ENCODE measurements at regions of chr3 and their contacts with region 1.

Region 1: GRCh38 chr3:81476692-81477091 is 284.8 kb downstream of the GBE1 start:
- DNase-seq: peak in 2 of 3 donors; percentile 53 to 59
- H3K4me3 ChIP-seq: no peak overlapping the region
- H3K27ac ChIP-seq: no peak overlapping the region
- H3K4me1 ChIP-seq: peaks cover 0 to 20% (median 5%) of the 10 kb centered on the region in 4 experiments
- H3K27me3 ChIP-seq: no peaks in the 10 kb centered on the region

Region 2: GRCh38 chr3:81490541-81491288 is 14.0 kb after region 1 on chr3:
- CTCF ChIA-PET with region 1: interaction called, 14 read pairs
- POLR2A ChIA-PET with region 1: no interaction called
- DNase-seq: peak; percentile 87 to 93 (median 89)
- H3K4me3 ChIP-seq: no peak overlapping the region
- H3K27ac ChIP-seq: no peak overlapping the region
- H3K4me1 ChIP-seq: peaks cover 0 to 2% (median under 1%) of the 10 kb centered on the region in 4 experiments
- H3K27me3 ChIP-seq: no peaks in the 10 kb centered on the region

Measured in common myeloid progenitor, CD34-positive (primary cell).